Right cardiac atrium (tissue), 5 donors: ENCODE measurements at regions of chr2 and their contacts with region 1.

Region 1: GRCh38 chr2:188788621-188789020 is 185.6 kb upstream of the COL3A1 start:
- DNase-seq: peak; percentile 69 to 82 (median 77)
- ATAC-seq: peak; percentile 83 to 85
- H3K4me3 ChIP-seq: no peak overlapping the region
- H3K27ac ChIP-seq: no peak overlapping the region
- H3K4me1 ChIP-seq: no peaks in the 10 kb centered on the region
- H3K27me3 ChIP-seq: no peaks in the 10 kb centered on the region

Region 2: DNA sequence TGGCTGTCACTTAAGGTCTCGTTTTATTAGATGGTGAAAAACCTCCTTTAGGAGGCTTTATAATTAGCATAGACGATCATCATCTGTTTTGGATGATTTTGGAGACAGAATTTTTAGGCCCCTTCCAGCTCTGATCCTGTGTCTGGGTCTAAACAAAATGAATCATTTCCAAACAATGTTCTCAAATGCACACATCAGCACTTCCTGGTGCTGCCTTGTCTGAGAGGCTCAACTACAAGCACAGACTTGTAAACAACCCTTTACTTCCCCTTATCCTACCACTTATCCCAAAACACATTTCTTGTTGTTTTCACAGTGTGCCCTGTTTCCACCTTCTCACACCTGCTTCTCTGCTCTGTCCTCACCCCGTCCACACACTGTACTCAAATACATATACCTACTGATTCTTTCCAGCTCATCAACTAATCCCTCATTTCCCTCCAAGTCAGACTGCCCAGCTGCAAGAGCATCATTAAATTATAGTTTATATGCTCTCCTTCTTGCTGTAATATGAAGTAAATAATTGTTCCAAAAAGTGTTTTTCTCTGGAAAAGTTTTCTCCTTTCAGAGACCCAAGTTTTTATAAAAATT is 114.4 kb after region 1 on chr2:
- intact Hi-C with region 1: loop called in 1 of 4 experiments (anchors 10 kb)
- DNase-seq: no peak
- ATAC-seq: no peak
- H3K4me3 ChIP-seq: no peak overlapping the region
- H3K27ac ChIP-seq: no peak overlapping the region
- H3K4me1 ChIP-seq: peaks cover under 1% of the 10 kb centered on the region
- H3K27me3 ChIP-seq: no peaks in the 10 kb centered on the region

Region 3: GRCh38 chr2:188978291-188979081 is 189.9 kb after region 1 on chr2:
- intact Hi-C with region 1: loop called in 2 of 4 experiments (anchors 5 to 10 kb)
- DNase-seq: no peak
- ATAC-seq: peak; percentile 57 to 61
- H3K4me3 ChIP-seq: peak overlapping the region; percentile 45
- H3K27ac ChIP-seq: no peak overlapping the region
- H3K4me1 ChIP-seq: no peaks in the 10 kb centered on the region
- H3K27me3 ChIP-seq: no peaks in the 10 kb centered on the region

Region 4: DNA sequence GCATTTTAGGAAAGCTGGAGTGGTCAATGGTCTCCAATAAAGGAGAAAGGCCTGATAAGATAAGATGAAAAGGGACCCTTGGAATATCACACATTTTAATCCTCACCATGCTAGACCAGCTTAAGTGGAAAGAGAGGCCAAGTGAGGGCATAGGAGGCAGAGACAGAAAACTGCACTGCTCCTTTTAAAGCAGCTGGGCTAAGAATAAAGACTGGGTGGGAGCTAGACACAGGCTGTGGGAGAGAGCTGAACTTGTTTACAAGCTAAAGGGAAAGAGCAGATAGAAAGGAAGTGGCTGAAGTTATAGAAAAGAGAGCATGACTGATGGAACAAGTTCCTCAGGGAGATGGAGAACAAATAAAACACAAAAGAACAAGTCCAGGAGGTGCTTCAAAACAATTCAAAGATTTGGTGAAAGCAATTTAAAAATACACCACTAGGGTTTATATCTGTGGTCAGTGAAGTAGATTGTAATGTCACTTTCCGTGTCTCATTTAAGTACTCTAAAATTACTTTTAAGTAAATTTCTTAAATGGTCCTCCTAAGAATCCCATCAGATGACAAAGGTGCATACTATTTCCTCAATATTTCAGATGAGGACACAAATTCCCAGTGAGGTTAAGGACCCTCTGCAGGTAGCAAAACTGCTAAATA is 383.5 kb after region 1 on chr2:
- intact Hi-C with region 1: no loop called
- DNase-seq: no peak
- ATAC-seq: no peak
- H3K4me3 ChIP-seq: no peak overlapping the region
- H3K27ac ChIP-seq: no peak overlapping the region
- H3K4me1 ChIP-seq: no peaks in the 10 kb centered on the region
- H3K27me3 ChIP-seq: no peaks in the 10 kb centered on the region